Activated T-helper 2 cell treated with anti-CD3 and anti-CD28 coated beads, Interferon-gamma antibody, Interleukin-2, Interleukin-4, amounts not matched to agents 10 μg/mL and 5 μg/mL and 100 μg/mL, durations not matched to agents 14 hours and 24 hours and 36 hours (primary cell): ENCODE measurements at regions of chr6 and their contacts with region 1.

Region 1: DNA sequence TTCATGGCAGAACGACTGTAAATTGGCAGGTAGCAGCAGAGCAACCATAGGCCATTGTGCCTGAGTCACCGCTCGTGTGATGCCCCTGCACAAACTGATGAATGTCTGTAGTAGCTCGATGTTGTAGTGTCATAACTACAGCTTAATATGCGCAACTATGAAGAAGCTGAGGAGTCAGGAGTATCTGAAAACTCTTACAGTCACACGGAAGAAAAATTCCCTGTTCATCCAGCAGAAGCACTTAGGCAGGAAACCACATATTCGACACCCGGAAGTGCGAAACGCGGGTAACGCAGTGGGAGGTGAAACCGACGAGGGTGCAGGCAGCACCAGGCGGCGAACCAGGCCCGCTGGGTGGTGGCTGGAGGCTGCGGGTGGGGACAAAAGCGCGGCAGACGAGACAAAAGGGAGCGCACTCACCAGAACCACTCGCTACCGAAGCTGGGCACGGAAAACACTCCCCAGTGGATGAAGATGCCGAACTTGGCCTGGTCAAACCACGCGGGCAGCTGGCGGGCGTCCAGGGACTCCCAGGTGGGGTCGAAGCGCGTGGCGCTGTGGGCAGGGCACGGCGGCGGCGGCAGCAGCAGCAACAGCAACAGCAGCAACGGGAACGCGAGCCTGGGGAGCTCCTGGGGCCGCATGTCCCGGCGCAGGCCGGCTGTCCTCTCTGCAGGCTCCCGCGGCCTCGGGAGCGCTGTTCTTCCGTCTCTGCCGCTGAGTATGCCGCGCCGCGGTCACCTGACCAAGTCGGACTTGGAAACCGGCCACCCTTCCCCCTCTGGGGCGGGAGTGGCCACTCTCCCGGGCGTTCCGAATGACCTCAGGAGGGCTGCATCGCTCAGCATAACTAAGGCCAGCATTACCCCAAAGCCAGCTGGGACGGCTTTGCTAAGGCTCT is at the start of gene FUCA2:
- DNase-seq: peak; percentile 66
- H3K4me3 Mint-ChIP-seq: peak within 1 kb of the TSS; percentile 93
- H3K27ac Mint-ChIP-seq: peak within 1 kb of the TSS; percentile 92
- H3K4me1 Mint-ChIP-seq: peaks cover 29% of the 10 kb centered on the region
- H3K27me3 Mint-ChIP-seq: no peaks in the 10 kb centered on the region
- total RNA-seq, gene FUCA2: 20.9 and 22.8 TPM in 2 replicates

Region 2: DNA sequence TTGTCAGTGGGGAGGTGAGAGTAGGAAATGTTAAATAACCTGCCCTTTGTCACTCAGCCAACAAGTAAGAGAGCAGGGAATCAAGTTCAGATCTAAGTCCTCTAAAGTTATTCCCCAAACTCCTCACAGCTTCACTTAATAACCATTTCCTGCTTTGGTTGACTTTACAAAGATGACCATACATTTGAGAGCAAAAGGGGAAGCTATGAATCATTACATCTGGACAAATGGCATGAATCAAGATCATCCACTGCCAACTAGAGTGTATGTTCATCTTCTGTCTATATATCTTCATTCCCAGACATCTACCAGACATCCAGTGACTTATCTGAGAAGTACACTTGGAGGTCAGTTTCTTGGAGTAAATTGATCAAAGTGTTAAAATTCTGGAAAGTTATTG is 551.1 kb before region 1 on chr6:
- intact Hi-C with region 1: no loop called
- DNase-seq: no peak
- H3K4me3 Mint-ChIP-seq: no peak overlapping the region
- H3K27ac Mint-ChIP-seq: no peak overlapping the region
- H3K4me1 Mint-ChIP-seq: no peaks in the 10 kb centered on the region
- H3K27me3 Mint-ChIP-seq: no peaks in the 10 kb centered on the region

Region 3: DNA sequence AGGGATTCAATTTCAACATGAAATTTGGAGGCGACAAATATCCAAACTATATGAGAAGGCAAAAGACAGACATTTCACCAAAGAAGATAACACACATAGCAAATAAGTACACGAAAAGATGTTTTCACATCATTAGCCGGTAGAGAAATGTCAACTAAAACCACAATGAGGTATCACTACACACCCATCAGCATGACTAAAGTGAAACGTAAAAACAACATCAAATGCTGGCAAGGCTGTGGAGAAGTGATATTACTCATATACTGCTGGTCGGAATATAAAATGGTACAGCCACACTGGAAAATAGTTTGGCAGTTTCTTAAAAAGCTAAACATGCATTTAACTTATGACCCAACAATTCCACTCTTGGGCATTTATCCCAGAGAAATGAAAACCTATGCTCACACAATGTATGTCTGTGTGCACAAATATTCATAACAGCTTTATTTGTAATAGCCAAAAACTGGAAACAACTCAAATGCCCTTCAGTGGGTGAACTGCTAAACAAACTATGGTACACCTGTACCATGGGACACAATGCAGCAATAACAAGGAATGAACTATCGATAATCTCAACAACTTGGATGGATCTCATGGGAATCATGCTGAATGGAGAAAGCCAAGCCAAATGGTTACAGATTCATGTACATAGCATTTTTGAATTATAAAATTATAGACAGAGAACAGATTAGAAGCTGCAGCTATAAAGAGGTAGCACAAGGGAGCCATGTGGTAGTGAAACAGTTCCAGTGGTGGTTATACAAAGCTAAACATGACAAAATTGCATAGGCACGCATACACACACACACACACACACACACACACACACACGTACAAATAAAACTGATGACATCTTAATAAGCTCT is 69.3 kb before region 1 on chr6:
- intact Hi-C with region 1: loop called (anchors 2 kb)
- DNase-seq: peak; percentile 11
- H3K4me3 Mint-ChIP-seq: peak overlapping the region; percentile 15
- H3K27ac Mint-ChIP-seq: peak overlapping the region; percentile 92
- H3K4me1 Mint-ChIP-seq: peaks cover 59% of the 10 kb centered on the region
- H3K27me3 Mint-ChIP-seq: no peaks in the 10 kb centered on the region

Region 4: GRCh38 chr6:143450453-143451371 is 60.5 kb before region 1 on chr6 and contains the starts of genes ADAT2 and PEX3:
- intact Hi-C with region 1: loop called (anchors 2 kb)
- DNase-seq: peak; percentile 93
- H3K4me3 Mint-ChIP-seq: peak within 1 kb of the TSS; percentile 94
- H3K27ac Mint-ChIP-seq: peak within 1 kb of the TSS; percentile 97
- H3K4me1 Mint-ChIP-seq: peaks cover 36% of the 10 kb centered on the region
- H3K27me3 Mint-ChIP-seq: no peaks in the 10 kb centered on the region
- total RNA-seq, gene ADAT2: 35.7 and 37.6 TPM in 2 replicates
- total RNA-seq, gene PEX3: 21.4 and 23.6 TPM in 2 replicates

Region 5: DNA sequence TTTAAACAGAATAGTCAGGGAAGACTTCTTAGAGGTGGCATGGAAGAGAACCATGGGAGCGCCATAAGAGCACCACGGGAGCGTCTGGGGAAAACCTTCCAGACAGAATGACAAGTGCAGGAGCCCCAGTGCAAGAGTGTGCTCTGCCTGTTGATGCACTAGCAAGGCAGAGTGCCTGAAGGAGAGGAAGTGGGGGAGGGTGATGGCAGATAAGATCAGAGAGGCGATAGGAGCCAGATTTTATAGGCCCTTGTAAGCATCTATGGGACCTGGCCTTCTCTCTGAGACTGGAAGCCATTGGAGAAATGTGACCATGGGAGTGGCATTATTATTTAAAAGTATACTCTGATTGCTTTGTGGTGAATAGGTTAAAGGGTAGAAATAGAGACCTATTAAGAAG is 12.8 kb before region 1 on chr6:
- intact Hi-C with region 1: no loop called
- DNase-seq: no peak
- H3K4me3 Mint-ChIP-seq: no peak overlapping the region
- H3K27ac Mint-ChIP-seq: no peak overlapping the region
- H3K4me1 Mint-ChIP-seq: peaks cover 16% of the 10 kb centered on the region
- H3K27me3 Mint-ChIP-seq: no peaks in the 10 kb centered on the region

Region 6: DNA sequence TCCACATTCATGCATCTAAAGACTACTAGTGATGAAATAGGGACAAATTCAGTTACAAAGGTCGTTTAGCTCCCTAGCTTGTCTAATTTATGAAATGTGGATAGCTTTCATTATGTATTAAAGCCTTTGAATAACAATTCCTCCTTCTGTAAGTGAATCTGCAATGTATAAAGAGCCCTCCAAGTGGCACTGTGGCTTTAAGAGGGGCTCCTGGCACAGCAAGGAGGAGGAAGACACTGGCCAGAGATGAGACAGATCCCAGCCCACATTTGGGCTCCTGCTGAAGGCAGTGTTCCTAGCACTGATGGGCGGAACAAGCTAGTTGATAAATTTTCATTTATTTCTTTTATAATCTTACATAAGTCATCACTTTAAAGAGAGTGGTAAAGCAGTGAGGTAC is 17.9 kb after region 1 on chr6:
- intact Hi-C with region 1: loop called (anchors 2 kb)
- DNase-seq: no peak
- H3K4me3 Mint-ChIP-seq: no peak overlapping the region
- H3K27ac Mint-ChIP-seq: no peak overlapping the region
- H3K4me1 Mint-ChIP-seq: peaks cover 12% of the 10 kb centered on the region
- H3K27me3 Mint-ChIP-seq: no peaks in the 10 kb centered on the region

Region 7: DNA sequence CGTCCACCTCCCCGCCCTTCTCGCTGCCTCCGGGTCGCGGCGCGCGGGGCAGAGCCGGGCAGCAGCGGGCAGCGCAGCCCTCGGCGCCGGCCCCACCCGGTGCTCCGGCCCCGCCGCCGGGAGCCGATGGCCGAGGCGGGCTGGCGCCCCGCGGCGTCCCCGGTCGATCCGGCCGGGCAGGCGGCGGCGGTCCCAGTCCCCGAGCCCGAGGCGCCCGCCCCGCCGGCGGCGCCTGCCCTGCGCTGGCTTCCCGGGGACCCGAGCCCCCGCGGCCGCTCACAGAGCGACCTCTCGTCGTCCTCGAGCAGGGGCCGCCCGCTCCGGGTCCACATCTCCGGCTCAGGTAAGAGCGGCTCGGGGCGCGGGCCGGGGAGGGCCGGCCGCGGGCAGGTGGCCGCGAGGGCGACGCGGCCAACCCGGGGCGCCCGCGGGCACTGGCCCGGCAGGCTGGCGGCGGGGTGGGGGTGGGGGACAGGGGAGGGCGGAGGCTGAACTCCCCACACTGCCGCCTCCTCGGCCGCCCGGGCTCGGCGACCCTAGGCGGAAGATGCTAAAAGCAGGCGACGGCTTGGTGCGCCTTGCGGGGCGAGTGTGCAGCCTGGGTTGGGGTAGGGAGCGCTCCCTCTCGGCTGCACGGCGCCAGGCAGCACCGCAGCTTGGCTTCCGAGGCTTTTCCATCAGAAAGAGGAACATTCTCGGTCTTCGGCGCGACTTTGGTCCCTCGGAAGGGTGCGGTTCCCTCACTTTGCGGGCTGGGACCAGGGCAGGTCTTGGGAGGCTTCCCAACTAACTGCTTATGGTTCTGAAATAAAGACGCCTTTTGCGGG is 25.8 kb after region 1 on chr6:
- intact Hi-C with region 1: loop called (anchors 2 kb)
- DNase-seq: peak; percentile 61
- H3K4me3 Mint-ChIP-seq: peak overlapping the region; percentile 80
- H3K27ac Mint-ChIP-seq: peak overlapping the region; percentile 64
- H3K4me1 Mint-ChIP-seq: peaks cover 39% of the 10 kb centered on the region
- H3K27me3 Mint-ChIP-seq: no peaks in the 10 kb centered on the region

Region 8: GRCh38 chr6:143772116-143773086 is 261.2 kb after region 1 on chr6:
- intact Hi-C with region 1: no loop called
- DNase-seq: no peak
- H3K4me3 Mint-ChIP-seq: no peak overlapping the region
- H3K27ac Mint-ChIP-seq: no peak overlapping the region
- H3K4me1 Mint-ChIP-seq: no peaks in the 10 kb centered on the region
- H3K27me3 Mint-ChIP-seq: no peaks in the 10 kb centered on the region

Region 9: GRCh38 chr6:144013486-144013909 is 502.3 kb after region 1 on chr6:
- intact Hi-C with region 1: loop called (anchors 1 kb)
- DNase-seq: peak; percentile 32
- H3K4me3 Mint-ChIP-seq: no peak overlapping the region
- H3K27ac Mint-ChIP-seq: no peak overlapping the region
- H3K4me1 Mint-ChIP-seq: peaks cover 4% of the 10 kb centered on the region
- H3K27me3 Mint-ChIP-seq: peaks cover 37% of the 10 kb centered on the region